OCI-LY7 (cell line): ENCODE measurements at regions of chr17 and their contacts with region 1.

Region 1: DNA sequence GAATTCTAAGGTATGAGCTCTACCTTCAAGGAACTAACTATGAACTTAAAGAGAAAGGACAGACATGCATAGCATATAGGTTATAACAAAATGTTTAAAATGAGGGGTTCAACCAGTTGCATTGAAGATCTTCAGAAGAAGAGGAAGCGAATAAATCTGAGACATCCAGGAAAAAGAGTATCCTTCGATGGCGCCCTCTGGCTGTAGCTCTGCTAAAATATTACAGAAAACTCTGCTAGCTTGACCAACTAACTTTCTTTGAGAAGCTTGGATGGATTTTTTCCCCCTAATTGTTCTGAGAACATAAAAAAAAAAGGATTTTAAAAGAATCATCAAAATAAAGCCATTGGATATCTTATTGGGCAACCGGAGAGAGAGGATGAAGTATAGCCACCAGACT is 659.9 kb upstream of the SOX9 start:
- DNase-seq: peak; percentile 60
- H3K4me3 ChIP-seq: no peak overlapping the region
- H3K27ac ChIP-seq: no peak overlapping the region
- H3K4me1 ChIP-seq: no peaks in the 10 kb centered on the region
- CTCF ChIP-seq: peak; percentile 95

Region 2: DNA sequence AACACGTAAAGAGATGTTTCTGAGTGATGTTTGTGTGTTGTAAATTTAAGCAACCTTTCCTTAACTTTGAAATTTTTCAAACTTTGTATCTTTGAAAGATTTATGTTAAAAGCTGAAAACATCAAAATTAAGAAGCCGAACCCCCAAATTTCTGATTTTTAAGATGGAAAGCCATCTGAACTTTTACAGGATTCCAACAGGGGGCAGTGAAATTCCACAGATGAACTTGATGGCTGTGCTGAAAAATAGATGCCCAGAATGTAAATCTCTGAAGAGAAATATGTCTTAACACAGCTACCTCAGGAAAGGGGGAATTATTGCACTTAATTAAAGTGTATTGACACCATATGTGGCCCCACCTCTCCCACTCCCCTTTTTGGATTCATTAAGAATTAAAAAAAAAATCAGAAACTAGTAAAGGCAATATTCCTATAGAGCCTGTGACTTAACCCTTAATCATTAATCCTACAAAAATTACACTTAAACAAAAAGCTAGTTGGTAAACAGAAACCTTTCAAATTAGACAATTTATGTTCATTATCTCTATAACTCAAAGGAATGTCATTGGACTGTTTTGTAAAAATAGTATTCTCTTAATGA is 693.7 kb before region 1 on chr17:
- CTCF ChIA-PET with region 1: no interaction called
- POLR2A ChIA-PET with region 1: no interaction called
- intact Hi-C with region 1: loop called (anchors 1 kb)
- DNase-seq: peak; percentile 43
- H3K4me3 ChIP-seq: no peak overlapping the region
- H3K27ac ChIP-seq: no peak overlapping the region
- H3K4me1 ChIP-seq: no peaks in the 10 kb centered on the region
- CTCF ChIP-seq: peak; percentile 96

Region 3: DNA sequence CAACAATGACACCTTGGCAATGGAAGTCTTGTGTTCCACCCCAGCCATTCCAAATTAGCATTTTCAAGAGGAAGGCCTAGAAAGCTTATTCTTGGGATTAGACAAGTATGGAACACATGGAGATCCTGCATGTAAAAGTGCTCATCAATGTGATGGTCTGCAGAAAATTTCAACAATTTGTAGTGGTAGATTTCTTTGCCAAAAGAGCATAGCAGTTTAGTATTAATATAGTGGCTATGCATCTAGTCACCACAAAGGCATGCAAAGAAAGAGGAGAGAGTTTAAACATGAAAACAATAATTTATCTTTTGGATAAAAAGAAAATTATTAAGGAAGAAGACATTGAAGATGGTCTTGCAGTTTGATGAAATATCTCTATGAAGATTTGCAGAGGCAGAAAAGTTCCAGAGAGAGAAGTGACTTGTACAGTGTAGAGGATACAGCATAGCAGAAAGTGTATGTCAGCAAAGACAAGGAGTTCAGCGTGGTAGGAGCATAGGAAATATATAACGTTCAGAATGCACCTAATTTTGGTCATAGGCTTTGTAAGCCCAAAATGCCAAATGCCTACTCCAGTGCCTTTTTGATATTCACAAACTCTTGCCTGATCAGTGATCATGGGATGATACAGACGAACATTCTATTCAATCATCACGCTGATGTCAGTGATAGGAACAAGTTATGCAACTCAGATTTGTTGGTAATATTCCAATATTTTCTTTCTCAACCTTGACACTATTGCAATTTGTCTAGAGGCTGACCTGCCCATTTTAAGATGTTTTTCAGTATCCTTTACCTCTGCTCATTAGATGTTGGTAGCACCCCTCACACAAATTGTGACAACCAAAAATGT is 68.0 kb before region 1 on chr17:
- CTCF ChIA-PET with region 1: no interaction called
- POLR2A ChIA-PET with region 1: no interaction called
- intact Hi-C with region 1: no loop called
- DNase-seq: no peak
- H3K4me3 ChIP-seq: no peak overlapping the region
- H3K27ac ChIP-seq: no peak overlapping the region
- H3K4me1 ChIP-seq: no peaks in the 10 kb centered on the region
- CTCF ChIP-seq: no peak